ENCODE measurements at regions of chr19 and their contacts with region 1.

Region 1: DNA sequence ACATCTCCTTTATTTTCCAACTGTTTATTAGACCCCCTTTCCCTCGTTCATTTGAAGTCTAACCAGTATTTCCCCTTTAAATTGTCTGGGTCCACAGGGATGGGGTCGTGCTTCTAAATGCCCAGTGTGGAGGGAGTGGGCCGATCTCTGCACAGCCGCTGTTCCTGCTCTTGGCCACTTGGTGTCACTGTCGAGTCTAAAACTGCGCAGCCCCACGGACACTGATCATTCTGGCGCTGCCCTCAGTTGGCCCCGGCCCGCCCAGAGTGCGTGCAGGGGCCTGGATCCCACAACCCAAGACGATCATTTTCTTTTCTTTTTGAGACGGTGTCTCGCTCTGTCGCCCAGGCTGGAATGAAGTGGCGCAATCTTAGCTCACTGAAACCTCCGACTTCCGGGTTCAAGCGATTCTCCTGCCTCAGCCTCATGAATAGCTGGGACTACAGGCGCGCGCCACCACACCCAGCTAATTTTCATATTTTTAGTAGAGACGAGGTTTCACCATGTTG is 12.0 kb downstream of the WDR88 start:
- DNase-seq: peak; percentile 83 to 98
- ATAC-seq: peak; percentile 91 to 97
- H3K4me3 ChIP-seq: no peak overlapping the region
- H3K27ac ChIP-seq: peak overlapping the region; percentile 14 to 62; a peak in 4 of 6 replicates
- H3K4me1 ChIP-seq: no peaks in the 10 kb centered on the region
- CTCF ChIP-seq: peak; percentile 99
- EP300 ChIP-seq: no peak
- POLR2A ChIP-seq: no peak
- RAD21 ChIP-seq: peak; percentile 97

Region 2: GRCh38 chr19:33110137-33110910 is 33.6 kb before region 1 on chr19:
- CTCF ChIA-PET with region 1: no interaction called
- POLR2A ChIA-PET with region 1: no interaction called
- DNase-seq: peak in 1 of 2 experiments; percentile 39
- ATAC-seq: peak in 1 of 2 experiments; percentile 23; a peak in 2 of 6 replicates
- H3K4me3 ChIP-seq: no peak overlapping the region
- H3K27ac ChIP-seq: no peak overlapping the region
- H3K4me1 ChIP-seq: no peaks in the 10 kb centered on the region
- CTCF ChIP-seq: no peak
- EP300 ChIP-seq: no peak
- POLR2A ChIP-seq: no peak
- RAD21 ChIP-seq: no peak

Region 3: GRCh38 chr19:33156334-33156733 is 12.4 kb after region 1 on chr19:
- CTCF ChIA-PET with region 1: interaction called, 74 read pairs
- POLR2A ChIA-PET with region 1: no interaction called
- DNase-seq: no peak
- ATAC-seq: peak in 1 of 2 experiments; percentile 26; a peak in 1 of 6 replicates
- H3K4me3 ChIP-seq: no peak overlapping the region
- H3K27ac ChIP-seq: no peak overlapping the region
- H3K4me1 ChIP-seq: peaks cover 7% of the 10 kb centered on the region; the same call in 2 of the 3 replicates
- CTCF ChIP-seq: no peak
- EP300 ChIP-seq: no peak
- POLR2A ChIP-seq: no peak
- RAD21 ChIP-seq: no peak

Region 4: GRCh38 chr19:33163481-33163880 is 19.5 kb after region 1 on chr19:
- CTCF ChIA-PET with region 1: interaction called, 74 read pairs
- POLR2A ChIA-PET with region 1: no interaction called
- DNase-seq: no peak
- ATAC-seq: no peak
- H3K4me3 ChIP-seq: no peak overlapping the region
- H3K27ac ChIP-seq: no peak overlapping the region
- H3K4me1 ChIP-seq: no peaks in the 10 kb centered on the region
- CTCF ChIP-seq: no peak
- EP300 ChIP-seq: no peak
- POLR2A ChIP-seq: no peak
- RAD21 ChIP-seq: no peak

Region 5: DNA sequence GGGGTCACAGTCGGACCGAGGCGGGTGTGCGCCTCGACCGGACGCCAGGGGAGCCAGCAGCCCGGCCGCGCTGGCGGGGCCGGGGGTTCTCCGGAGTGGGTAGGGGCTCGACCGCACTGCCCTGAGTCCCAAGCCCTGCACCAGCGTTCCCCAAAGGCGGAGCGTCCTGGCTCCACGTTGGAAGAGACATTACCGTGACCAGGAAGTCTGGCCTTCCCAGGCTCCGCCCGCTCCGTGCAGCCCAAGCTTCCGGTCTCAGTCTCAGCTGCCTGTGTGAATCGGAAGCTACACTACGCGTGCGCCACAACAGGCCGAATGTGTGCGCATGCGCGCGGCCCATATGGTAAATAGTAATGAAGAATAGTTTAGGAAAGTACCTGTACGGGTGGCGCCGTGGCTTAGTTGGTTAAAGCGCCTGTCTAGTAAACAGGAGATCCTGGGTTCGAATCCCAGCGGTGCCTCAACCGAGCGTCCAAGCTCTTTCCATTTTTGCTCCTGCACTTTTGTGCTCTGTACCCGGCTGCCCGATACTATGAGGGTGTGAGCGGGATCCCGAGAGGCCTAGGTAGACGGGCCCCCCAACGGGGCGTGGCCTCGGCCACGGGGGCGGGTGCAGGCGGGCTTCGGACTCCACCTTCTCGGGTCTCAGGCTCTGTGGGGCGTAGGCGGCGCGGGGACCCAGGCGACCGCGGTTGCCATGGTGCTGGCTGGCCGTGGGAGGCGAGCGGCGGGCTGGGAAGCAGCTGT is 32.9 kb after region 1 on chr19:
- CTCF ChIA-PET with region 1: interaction called, 162 read pairs
- POLR2A ChIA-PET with region 1: interaction called, 9 read pairs
- DNase-seq: peak; percentile 100
- ATAC-seq: peak; percentile 84 to 94
- H3K4me3 ChIP-seq: peak overlapping the region; percentile 65
- H3K27ac ChIP-seq: peak overlapping the region; percentile 89 to 91
- H3K4me1 ChIP-seq: peaks cover 19% of the 10 kb centered on the region
- CTCF ChIP-seq: no peak
- EP300 ChIP-seq: no peak
- POLR2A ChIP-seq: peak; percentile 100
- RAD21 ChIP-seq: 0 out of 5 replicates have a peak, but pooled peaks of 1 of the 2 experiments have one; percentile 16

Region 6: GRCh38 chr19:33199441-33200265 is 55.7 kb after region 1 on chr19:
- CTCF ChIA-PET with region 1: interaction called, 18 read pairs
- POLR2A ChIA-PET with region 1: no interaction called
- DNase-seq: no peak
- ATAC-seq: no peak
- H3K4me3 ChIP-seq: no peak overlapping the region
- H3K27ac ChIP-seq: no peak overlapping the region
- H3K4me1 ChIP-seq: peaks cover 8% of the 10 kb centered on the region; the same call in 2 of the 3 replicates
- CTCF ChIP-seq: no peak
- EP300 ChIP-seq: no peak
- POLR2A ChIP-seq: no peak
- RAD21 ChIP-seq: no peak